Gastrocnemius medialis (tissue), 4 donors: ENCODE measurements at regions of chr11 and their contacts with region 1.

Region 1: DNA sequence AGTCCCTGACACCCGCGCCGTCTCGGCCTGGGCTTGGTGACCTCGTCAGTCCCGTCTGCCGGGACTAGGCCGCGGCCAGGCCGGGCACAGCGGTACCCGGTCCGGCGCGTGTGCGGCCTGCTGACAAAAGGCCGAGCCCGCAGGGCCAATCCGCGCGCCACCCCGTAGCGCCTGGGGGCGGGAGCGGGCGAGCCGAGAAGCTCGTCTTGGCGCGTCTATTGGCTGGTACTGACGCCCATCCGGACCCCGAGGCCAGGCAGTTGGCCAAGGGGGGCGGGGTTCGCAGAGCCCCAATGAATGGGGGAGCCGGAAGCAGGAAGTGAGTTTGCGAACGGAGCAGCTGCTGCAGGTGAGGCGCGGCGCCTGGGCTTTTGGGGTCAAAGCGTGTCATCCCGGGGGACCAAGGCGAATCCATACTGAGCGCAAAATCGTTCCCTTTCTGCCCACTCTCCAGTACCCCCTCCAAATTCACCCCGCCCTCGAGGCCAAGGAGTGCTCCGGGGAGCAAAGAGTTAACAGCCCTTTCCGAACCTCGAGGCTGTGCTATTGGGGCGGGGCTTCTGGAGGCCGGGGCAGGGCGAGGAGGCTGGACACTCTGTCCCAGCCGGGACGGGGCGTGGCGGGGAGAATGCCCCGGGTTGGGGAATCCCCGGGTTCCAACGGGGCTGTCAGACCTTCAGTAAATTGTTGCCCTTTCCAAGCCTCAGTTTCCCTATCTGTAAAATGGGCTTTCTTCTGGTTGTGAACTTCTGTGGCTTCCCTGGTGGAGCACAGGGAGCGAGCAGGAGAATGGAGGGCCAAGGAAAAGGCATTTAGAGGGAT is at the start of gene DPP3:
- DNase-seq: peak; percentile 96 to 97
- ATAC-seq: peak; percentile 90 to 92
- H3K4me3 ChIP-seq: peak within 1 kb of the TSS; percentile 62 to 95 (median 79)
- H3K27ac ChIP-seq: peak within 1 kb of the TSS; percentile 86 to 96 (median 89)
- H3K4me1 ChIP-seq: peaks cover 9 to 10% of the 10 kb centered on the region in 2 donors
- H3K27me3 ChIP-seq: no peaks in the 10 kb centered on the region
- CTCF ChIP-seq: peak in 1 of 5 experiments; percentile 21
- POLR2A ChIP-seq: peak; percentile 89 to 93
- total RNA-seq, gene DPP3: 28.5 to 58.5 (median 37.4) TPM

Region 2: DNA sequence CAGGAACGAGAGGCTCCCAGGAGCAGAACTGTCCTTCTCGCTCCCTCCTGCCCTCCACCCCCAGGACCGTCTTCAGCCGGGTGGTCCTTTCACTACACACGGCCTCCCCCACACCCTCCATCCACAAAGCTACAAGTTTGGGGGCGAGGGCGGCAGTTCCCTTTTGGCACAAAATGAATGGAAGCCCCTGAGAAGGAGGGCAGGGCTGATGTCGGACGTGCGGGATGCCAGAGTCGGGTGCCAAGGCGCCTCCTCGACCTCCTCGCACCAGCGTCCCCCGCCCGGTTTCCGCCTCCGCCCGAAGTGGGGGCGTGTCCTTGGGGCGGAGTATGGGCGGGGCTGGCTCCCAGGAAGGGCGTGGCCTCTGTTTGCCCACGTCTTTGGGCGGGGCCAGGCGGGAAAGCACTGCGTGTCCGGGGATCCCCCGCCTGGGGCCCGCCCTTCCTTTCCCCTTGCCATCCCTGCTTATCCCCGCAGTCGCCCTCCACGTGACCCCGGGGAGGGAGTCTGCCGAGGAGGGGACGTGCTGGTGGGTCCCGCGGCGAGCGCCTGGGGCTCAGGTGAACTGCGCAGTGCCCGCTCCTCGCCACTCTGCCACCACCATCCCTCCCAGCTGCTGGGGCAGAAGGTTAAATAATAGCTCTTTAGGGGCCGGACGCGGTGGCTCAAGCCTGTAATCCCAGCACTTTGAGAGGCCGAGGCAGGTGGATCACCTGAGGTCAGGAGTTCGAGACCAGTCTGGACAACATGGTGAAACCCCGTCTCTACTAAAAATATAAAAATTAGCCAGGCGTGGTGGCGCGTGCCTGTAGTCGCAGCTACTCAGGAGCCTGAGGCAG is 606.8 kb before region 1 on chr11:
- in situ Hi-C with region 1: no loop called
- intact Hi-C with region 1: no loop called
- DNase-seq: peak; percentile 85 to 91
- ATAC-seq: peak; percentile 84 to 89
- H3K4me3 ChIP-seq: peak overlapping the region; percentile 54 to 63 (median 60)
- H3K27ac ChIP-seq: peak overlapping the region; percentile 80 to 87 (median 82)
- H3K4me1 ChIP-seq: peaks cover 0 to 19% of the 10 kb centered on the region in 2 donors
- H3K27me3 ChIP-seq: no peaks in the 10 kb centered on the region
- CTCF ChIP-seq: no peak
- POLR2A ChIP-seq: peak; percentile 76 to 82

Region 3: GRCh38 chr11:66438504-66439466 is 41.5 kb before region 1 on chr11 and contains the start of gene MRPL11:
- in situ Hi-C with region 1: no loop called
- intact Hi-C with region 1: loop called (anchors 2 kb)
- DNase-seq: peak; percentile 74 to 86
- ATAC-seq: peak; percentile 100
- H3K4me3 ChIP-seq: peak within 1 kb of the TSS; percentile 91 to 95 (median 92)
- H3K27ac ChIP-seq: peak within 1 kb of the TSS; percentile 81 to 97 (median 84)
- H3K4me1 ChIP-seq: peaks cover 5 to 14% of the 10 kb centered on the region in 2 donors
- H3K27me3 ChIP-seq: no peaks in the 10 kb centered on the region
- CTCF ChIP-seq: peak; percentile 35 to 70 (median 57)
- POLR2A ChIP-seq: no peak
- total RNA-seq, gene MRPL11: 35.1 to 64.1 (median 52.5) TPM

Region 4: GRCh38 chr11:66466225-66467027 is 13.9 kb before region 1 on chr11 and contains the start of gene PELI3:
- in situ Hi-C with region 1: no loop called
- intact Hi-C with region 1: loop called (anchors 1 kb)
- DNase-seq: peak; percentile 87 to 90
- ATAC-seq: peak; percentile 87 to 92
- H3K4me3 ChIP-seq: peak within 1 kb of the TSS; percentile 61 to 89 (median 70)
- H3K27ac ChIP-seq: peak within 1 kb of the TSS; percentile 73 to 81 (median 78)
- H3K4me1 ChIP-seq: peaks cover 6 to 10% of the 10 kb centered on the region in 2 donors
- H3K27me3 ChIP-seq: no peaks in the 10 kb centered on the region
- CTCF ChIP-seq: no peak
- POLR2A ChIP-seq: peak in 1 of 2 donors; percentile 71
- total RNA-seq, gene PELI3: 26.1 to 55.9 (median 37.3) TPM

Region 5: DNA sequence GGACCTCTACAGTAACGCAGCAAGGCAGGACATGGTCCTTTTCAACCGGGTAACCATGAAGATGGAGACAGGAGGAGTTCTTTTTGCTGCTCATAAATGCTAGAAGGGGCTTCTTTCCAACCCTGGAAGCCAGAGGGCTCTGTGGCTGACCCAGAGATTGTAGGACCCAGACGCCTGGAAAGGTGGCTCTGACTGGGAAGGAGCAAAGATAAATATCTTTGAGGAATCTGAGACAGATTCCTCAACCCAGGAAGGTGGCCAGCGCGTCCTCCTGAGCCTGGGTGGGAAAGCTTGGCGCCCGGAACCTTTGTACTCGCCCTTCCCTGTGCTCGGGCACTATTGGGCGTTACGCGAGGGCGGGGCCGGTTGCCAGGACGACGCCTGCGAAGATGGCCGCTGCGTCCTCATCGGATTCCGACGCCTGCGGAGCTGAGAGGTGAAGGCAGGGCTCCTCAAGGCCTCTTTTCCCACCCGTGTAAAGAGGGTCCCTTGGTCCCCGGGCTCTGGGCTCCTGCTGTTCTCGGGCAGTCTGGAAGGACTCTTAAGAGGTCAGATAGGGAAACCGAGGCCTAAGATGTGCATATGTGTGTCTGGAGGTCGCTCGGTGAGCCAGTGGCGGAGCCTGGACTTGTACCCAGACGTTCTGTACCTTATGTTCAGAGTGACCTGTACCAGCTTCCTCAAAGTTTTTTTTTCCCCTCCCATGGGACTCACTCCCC is 30.1 kb after region 1 on chr11 and contains the start of gene BBS1:
- in situ Hi-C with region 1: no loop called
- intact Hi-C with region 1: loop called (anchors 1 kb)
- DNase-seq: peak; percentile 66 to 80
- ATAC-seq: peak; percentile 93 to 95
- H3K4me3 ChIP-seq: peak within 1 kb of the TSS; percentile 82 to 95 (median 86)
- H3K27ac ChIP-seq: peak within 1 kb of the TSS; percentile 67 to 79 (median 74)
- H3K4me1 ChIP-seq: peaks cover 11 to 17% of the 10 kb centered on the region in 2 donors
- H3K27me3 ChIP-seq: no peaks in the 10 kb centered on the region
- CTCF ChIP-seq: peak in 1 of 5 experiments; percentile 20
- POLR2A ChIP-seq: peak in 1 of 2 donors; percentile 20
- total RNA-seq, gene BBS1: 19.8 to 34.5 (median 31.2) TPM

Region 6: DNA sequence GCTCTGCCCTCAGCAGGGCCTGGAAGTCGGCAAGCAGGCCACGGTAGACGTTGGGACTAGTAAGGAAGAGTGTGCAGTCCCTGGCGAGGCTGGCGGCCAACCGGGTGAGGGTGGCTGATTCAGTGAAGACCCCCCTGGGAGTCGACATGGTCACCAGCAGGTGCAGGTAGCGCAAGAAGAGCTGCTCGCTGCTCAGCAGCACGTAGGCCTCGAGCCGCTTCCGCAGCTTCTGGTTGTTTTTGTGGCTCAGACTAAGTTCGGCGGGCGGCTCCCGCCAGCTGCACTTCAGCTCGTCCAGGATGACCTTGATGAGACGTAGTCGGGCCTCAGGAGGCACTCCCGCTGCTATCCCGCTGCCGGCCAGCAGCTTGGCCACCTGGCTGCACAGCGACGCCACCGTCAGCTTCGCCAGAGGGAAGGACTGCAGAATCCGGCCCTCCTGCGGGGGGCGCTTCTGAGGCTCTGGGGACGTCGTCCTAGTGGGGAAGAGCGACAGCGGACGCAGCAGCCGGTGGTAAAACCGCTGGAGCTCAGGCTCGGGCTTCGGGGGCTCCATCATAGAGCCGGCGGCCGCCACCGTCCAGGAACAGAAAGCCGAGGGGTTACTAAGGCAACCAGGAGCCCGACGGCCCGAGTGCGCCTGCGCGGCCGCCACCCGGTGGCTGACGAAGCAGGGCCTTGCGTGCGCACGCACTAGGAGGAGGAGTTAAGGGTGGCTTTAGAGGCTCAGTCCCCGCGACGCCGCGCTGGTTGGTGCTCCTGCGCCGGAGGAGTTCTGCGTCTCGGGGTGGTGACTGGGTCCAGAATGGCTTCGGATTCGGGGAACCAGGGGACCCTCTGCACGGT is 112.4 kb after region 1 on chr11 and contains the starts of genes CCDC87 and CCS:
- in situ Hi-C with region 1: no loop called
- intact Hi-C with region 1: loop called (anchors 5 kb)
- DNase-seq: peak; percentile 96 to 97
- ATAC-seq: peak; percentile 97 to 98
- H3K4me3 ChIP-seq: peak within 1 kb of the TSS; percentile 63 to 98 (median 82)
- H3K27ac ChIP-seq: peak within 1 kb of the TSS; percentile 82 to 91 (median 88)
- H3K4me1 ChIP-seq: peaks cover 12 to 21% of the 10 kb centered on the region in 2 donors
- H3K27me3 ChIP-seq: no peaks in the 10 kb centered on the region
- CTCF ChIP-seq: peak; percentile 79 to 94 (median 86)
- POLR2A ChIP-seq: peak; percentile 88
- total RNA-seq, gene CCDC87: 0.13 to 0.41 TPM in 2 of 4 donors, not detected in the others
- total RNA-seq, gene CCS: 9.0 to 12.3 (median 11.7) TPM